Activated CD4-positive, alpha-beta memory T cell treated with anti-CD3 and anti-CD28 coated beads for 36 hours (primary cell): ENCODE measurements at regions of chr11 and their contacts with region 1.

Region 1: GRCh38 chr11:110833033-110833484 is 120.8 kb upstream of the ARHGAP20 start:
- DNase-seq: no peak
- H3K4me3 Mint-ChIP-seq: no peak overlapping the region
- H3K27ac Mint-ChIP-seq: peak overlapping the region; percentile 25
- H3K4me1 Mint-ChIP-seq: peaks cover 16% of the 10 kb centered on the region
- H3K27me3 Mint-ChIP-seq: peaks cover 10% of the 10 kb centered on the region

Region 2: GRCh38 chr11:110818032-110818687 is 14.9 kb before region 1 on chr11:
- CTCF ChIA-PET with region 1: no interaction called
- POLR2A ChIA-PET with region 1: no interaction called
- intact Hi-C with region 1: loop called (anchors 1 kb)
- DNase-seq: peak; percentile 31
- H3K4me3 Mint-ChIP-seq: no peak overlapping the region
- H3K27ac Mint-ChIP-seq: no peak overlapping the region
- H3K4me1 Mint-ChIP-seq: peaks cover 7% of the 10 kb centered on the region
- H3K27me3 Mint-ChIP-seq: peaks cover 5% of the 10 kb centered on the region

Region 3: GRCh38 chr11:110858547-110858921 is 25.5 kb after region 1 on chr11:
- CTCF ChIA-PET with region 1: no interaction called
- POLR2A ChIA-PET with region 1: no interaction called
- intact Hi-C with region 1: no loop called
- DNase-seq: no peak
- H3K4me3 Mint-ChIP-seq: no peak overlapping the region
- H3K27ac Mint-ChIP-seq: no peak overlapping the region
- H3K4me1 Mint-ChIP-seq: no peaks in the 10 kb centered on the region
- H3K27me3 Mint-ChIP-seq: peaks cover 2% of the 10 kb centered on the region

Region 4: DNA sequence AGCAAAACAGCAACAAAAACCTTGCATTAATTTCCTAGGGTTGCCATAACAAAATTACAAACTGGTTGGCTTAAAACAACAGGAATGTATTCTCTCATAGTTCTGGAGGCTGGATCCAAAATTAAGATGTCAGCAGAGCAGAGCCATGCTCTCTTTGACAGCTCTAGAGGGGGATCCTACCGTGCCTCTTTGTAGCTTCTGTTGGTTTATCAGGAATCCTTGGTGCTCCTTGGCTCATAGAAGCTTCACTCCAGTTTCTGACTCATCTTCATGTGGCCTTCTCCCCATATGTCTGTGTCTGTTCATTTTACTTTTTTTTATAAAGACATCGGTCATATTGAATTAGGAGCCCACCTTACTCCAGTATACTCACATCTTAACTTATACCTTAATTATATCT is 322.0 kb after region 1 on chr11:
- CTCF ChIA-PET with region 1: no interaction called
- POLR2A ChIA-PET with region 1: no interaction called
- intact Hi-C with region 1: no loop called
- DNase-seq: no peak
- H3K4me3 Mint-ChIP-seq: no peak overlapping the region
- H3K27ac Mint-ChIP-seq: no peak overlapping the region
- H3K4me1 Mint-ChIP-seq: no peaks in the 10 kb centered on the region
- H3K27me3 Mint-ChIP-seq: no peaks in the 10 kb centered on the region

Region 5: DNA sequence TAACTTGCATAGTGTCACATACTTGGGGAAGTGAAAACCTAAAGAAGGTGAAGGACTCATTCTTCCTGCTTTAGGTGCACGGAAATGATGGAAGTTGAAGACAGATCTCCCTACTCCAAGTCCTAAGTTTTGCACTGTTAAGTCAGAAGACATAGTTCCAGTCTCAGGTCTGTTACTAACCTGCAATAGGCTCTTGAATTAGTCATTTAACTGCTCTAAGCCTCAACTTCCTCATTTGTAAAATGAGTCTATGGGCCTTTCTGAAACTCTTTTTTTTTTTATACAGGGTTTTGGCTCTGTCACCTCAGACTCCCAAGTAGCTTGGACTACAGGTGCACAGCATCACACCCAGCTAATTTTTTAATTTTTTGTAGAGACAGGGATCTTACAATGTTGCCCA is 576.9 kb after region 1 on chr11:
- CTCF ChIA-PET with region 1: no interaction called
- POLR2A ChIA-PET with region 1: no interaction called
- intact Hi-C with region 1: loop called (anchors 5 kb)
- DNase-seq: no peak
- H3K4me3 Mint-ChIP-seq: no peak overlapping the region
- H3K27ac Mint-ChIP-seq: no peak overlapping the region
- H3K4me1 Mint-ChIP-seq: peaks cover 39% of the 10 kb centered on the region
- H3K27me3 Mint-ChIP-seq: no peaks in the 10 kb centered on the region